ENCODE measurements at regions of chr1 and their contacts with region 1.

Region 1: GRCh38 chr1:224851210-224851847 is 78.1 kb upstream of the DNAH14 start:
- DNase-seq: no peak
- H3K4me3 ChIP-seq: no peak overlapping the region
- CTCF ChIP-seq: peak; percentile 79

Region 2: DNA sequence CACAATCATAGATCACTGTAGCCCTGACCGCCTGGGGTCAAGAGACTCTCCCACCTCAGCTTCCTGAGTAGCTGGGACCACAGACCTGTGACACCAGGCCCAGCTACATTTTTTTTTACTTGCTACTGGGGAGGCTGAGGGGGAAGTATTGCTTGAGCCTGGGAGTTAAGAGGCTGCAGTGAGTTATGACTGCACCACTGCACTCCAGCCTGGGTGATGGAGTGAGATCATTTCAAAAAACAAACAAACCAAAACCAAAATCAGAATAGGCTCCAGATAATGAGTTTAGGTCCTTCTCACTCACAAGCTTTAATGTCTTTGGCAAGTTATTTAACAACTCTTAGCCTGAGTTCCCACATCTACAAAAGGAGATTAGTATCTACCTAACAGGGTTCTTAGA is 439.6 kb before region 1 on chr1:
- CTCF ChIA-PET with region 1: no interaction called
- POLR2A ChIA-PET with region 1: no interaction called
- DNase-seq: no peak
- H3K4me3 ChIP-seq: no peak overlapping the region
- CTCF ChIP-seq: no peak

Region 3: DNA sequence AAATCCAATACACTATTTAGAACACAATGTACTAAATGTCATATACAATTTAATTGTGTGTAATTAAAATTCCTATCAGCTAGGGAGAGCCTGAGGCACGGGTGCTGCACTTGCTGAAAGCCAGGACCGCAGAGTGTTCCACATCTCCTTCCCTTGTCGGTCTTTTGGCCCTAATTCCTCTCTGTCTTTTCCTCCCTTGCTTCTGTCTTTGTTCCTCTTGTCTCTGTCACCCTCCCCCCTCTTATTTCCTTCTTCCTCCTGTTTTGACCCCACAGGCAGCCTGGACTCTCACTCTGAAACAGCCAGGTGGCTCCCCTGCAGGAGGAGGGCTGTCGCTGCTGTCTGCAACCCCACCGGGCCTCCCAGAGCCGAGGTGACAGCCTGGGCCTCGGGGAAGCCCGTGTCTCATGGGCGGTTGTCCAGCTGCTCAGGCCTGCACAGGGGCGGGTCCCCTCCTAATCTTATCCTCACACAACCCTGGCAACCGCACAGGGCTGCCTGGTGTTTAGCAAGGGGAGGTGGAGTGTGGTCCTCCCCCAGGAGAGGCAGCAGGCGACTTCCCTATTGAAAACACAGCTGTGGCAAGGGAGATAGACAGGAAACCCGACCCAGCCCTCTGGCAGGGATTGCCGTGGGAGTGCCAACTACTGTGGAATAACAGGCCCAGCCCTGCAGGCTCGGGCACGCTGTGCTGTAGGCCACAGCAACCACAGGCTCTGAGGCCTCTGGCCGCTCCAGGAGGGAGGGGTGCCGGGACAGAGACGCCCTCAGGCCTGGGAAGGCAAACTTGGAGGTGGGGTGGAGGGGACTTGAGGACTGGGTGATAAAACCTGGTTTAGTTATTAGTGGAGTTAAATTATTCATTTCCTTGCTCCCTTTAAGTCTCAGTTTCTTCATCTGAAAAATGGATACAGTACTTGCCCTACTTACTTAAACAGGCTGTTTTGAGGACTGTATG is 347.9 kb before region 1 on chr1:
- CTCF ChIA-PET with region 1: interaction called, 511 read pairs
- POLR2A ChIA-PET with region 1: no interaction called
- DNase-seq: no peak
- H3K4me3 ChIP-seq: no peak overlapping the region
- CTCF ChIP-seq: no peak

Region 4: DNA sequence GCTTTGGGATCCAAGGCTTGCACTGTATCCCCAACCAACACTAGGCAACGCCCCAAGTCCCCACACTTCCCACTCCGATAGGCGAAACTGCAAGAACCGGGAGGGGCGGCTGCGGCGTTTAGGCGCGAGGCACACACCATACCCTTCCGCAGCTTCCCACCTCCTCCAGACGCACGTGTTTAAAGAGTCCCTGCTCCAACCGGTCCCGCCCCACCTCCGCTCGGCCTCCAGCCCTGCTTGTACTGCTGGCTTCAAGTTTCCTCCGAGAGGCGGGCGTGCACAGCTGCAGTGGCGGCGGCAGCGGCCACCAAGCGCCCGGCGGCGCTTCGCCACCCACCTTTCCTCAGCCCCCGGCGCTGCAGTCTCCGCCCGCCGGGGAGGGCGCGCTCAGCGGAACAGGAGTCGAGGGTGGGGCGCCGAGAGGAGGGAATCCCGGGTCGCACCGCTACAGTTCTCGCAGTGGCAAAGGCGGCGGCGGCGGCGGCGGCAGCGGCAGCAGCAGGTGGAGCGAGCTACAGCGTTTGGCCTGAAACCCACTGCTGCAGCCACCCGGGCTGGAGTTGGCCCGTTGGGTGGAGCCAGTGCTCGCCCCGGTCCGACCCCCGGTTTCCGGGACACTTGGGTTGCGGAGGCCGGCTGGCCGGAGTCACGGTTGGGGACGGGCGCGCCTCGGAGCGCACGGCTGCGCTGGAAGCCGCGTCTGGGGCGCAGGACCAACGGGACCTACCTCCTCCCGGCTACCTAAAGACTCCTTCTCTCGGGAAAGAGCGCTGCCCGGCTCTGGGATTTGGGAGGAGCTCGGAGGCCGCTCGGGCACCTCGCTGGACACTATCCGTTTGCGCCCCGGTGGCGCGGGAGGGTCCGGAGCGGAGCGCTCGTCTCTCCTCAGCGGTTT is 235.2 kb before region 1 on chr1 and contains the start of gene CNIH3:
- CTCF ChIA-PET with region 1: interaction called, 18 read pairs
- POLR2A ChIA-PET with region 1: no interaction called
- DNase-seq: no peak
- H3K4me3 ChIP-seq: peak within 1 kb of the TSS; percentile 55
- CTCF ChIP-seq: no peak

Region 5: GRCh38 chr1:224675590-224675989 is 175.7 kb before region 1 on chr1:
- CTCF ChIA-PET with region 1: interaction called, 11 read pairs
- POLR2A ChIA-PET with region 1: no interaction called
- DNase-seq: no peak
- H3K4me3 ChIP-seq: no peak overlapping the region
- CTCF ChIP-seq: no peak

Region 6: GRCh38 chr1:224779536-224779935 is 71.8 kb before region 1 on chr1:
- CTCF ChIA-PET with region 1: interaction called, 11 read pairs
- POLR2A ChIA-PET with region 1: no interaction called
- DNase-seq: no peak
- H3K4me3 ChIP-seq: no peak overlapping the region
- CTCF ChIP-seq: no peak

Region 7: DNA sequence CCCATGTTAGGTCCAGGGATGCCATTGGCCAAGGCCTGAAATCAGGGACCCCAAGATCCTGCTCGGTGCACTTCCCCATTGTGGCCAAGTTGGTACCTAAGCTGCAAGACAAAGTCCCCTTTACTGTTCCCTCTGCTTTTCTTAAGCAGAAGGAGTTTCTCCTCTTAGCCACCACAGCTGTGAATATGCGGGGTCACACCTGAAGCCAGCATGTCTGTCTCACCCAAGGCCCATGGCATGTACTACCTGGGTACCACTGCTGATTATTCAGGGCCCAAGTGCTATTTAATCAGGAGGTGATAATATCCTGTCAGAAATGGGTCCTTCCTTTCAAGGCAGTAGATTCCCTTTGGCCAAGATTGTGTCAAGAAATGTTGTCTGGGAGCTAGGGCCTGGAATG is 55.7 kb before region 1 on chr1:
- CTCF ChIA-PET with region 1: no interaction called
- POLR2A ChIA-PET with region 1: no interaction called
- DNase-seq: no peak
- H3K4me3 ChIP-seq: no peak overlapping the region
- CTCF ChIP-seq: no peak

Region 8: DNA sequence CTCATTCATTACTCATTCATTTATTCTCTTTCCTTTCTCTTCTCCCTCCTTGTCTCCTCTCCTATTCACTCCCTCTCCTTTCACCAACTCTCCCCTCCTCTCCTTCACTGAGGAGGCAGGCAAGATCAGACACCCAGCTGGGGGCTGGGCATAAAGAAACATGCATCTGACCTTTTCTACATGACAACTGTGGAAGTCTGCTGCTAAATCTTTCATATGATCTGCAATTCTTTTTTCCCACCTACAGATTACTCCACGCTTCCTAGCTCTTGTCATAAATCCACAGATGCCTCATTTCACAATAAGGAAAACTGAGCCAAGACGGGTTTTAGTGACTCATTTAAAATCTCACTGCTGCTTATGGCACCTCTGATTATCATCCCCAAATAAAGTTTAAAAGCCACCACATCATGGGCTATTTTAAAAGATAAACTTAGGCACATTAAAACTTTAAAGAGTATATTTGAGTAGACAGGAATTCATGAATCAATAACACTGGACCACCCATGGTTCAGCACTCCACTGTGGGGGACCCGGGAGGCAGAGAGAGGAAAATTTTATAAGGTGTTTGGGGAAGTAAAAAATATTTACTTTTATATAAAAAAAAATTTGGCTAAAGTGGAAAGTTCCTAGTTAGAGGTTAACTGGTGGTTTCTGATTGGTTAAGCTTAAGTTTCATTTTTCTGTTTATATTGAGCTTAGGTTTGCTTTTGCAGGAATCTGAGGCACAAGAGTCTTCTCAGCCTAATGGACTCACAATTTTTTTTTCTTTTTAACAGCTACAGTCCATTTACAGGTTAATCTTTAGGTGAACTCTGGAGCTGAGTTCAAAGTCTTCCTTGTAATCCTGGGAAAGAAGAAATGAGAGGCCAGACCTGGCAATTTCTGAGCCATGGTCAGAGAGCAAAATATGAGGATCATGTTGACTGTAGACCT is 22.4 kb after region 1 on chr1:
- CTCF ChIA-PET with region 1: interaction called, 50 read pairs
- POLR2A ChIA-PET with region 1: no interaction called
- DNase-seq: no peak
- H3K4me3 ChIP-seq: no peak overlapping the region
- CTCF ChIP-seq: no peak

Region 9: DNA sequence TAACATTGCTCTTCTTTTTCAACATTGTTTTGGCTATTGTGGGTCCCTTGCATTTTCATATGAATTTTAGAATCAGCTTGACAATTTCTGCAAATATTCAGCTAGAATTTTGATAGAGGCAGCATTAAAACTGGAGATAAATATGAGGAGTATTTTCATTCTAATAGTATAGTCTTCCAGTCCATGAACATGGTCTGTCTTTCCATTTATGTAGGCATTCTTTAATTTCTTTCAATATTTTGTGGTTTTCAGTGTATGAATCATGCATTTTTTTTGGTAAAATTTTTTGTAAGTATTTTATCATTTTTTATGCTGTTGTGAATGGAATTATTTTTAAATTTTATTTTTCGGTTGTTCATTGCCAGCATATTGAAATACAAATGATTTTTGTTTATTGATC is 175.4 kb after region 1 on chr1:
- CTCF ChIA-PET with region 1: no interaction called
- POLR2A ChIA-PET with region 1: no interaction called
- DNase-seq: no peak
- H3K4me3 ChIP-seq: no peak overlapping the region
- CTCF ChIP-seq: no peak